PC-3 (cell line): ENCODE measurements at regions of chr4 and their contacts with region 1.

Region 1: DNA sequence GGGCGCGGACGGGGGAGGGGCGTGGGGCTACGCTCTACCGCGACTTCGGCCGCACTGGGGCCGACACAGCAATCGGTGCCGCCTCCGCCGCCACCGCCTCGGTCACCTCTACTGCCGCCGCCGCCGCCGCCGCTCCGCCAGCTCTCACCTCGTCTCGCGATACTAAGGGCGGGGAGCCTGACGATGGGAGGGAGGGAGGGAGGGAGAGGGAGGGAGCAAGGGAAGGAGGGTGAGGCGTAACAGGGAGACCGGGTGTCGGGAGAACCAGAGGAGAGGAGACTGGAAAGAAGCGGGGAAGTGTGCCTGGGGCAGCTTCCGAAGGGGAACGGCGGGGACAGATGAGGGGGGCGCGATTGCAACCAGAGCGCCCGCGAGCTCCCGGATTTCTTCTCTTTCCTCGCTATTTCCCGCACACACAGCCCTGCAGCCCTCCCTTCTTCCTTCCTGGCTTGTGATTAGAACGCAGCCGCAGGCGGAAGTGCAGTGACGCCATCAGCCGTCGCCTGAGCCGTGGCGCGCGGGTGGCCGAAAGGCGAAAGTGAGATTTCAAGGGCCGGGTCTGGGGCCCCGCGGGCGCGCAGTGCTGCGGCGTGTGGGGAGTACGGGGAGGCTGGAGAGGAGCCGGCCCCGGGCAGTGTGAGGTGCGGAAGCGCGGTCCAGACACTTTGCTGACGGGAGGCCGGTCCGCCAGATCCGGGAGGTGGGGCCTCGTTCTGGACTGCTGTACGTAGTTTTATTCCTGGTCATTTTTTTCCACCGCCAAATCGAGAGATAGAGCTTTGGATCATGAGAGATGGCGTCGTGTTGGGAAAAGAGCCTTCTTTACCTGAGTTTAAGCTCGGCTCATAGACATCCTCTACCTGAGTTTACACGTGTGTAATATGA is at the start of gene ANKRD17:
- DNase-seq: peak; percentile 96
- ATAC-seq: peak; percentile 65
- H3K4me3 ChIP-seq: peak within 1 kb of the TSS; percentile 90
- H3K27ac ChIP-seq: peak within 1 kb of the TSS; percentile 92
- H3K4me1 ChIP-seq: peaks cover 26% of the 10 kb centered on the region
- H3K27me3 ChIP-seq: no peaks in the 10 kb centered on the region
- CTCF ChIP-seq: 0 out of 2 replicates have a peak, but pooled peaks have one; percentile 2
- total RNA-seq, gene ANKRD17: 51.2 and 64.4 TPM in 2 replicates

Region 2: DNA sequence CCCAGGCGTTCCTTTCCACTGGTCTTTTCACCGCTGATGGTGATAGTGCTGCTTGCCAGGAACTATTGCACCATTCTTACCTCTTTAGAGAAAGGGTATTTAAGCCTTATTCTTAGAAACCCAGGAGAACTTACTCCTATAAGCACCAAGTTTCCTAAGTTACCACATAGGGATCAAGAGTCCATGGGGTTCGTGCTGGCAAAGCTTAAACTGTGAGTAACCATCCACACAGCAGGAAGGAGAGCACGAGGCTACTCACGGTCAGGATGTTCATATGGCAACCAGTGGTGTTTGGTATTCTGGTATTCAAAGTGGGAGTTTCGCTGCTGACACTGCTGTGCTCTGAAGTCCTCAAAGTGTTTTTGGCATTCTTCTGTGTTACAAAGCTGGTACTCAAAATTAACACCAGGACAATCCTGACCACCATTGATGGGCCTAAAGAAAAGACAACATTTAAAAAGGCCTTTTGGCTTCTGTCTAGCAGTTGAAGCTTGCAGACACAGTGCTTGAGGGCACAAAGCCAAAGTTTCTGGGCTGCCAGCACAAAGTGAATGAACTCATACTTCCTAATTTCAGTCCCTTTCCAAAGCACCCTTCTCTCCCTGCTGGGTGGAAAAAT is 946.8 kb before region 1 on chr4:
- CTCF ChIA-PET with region 1: no interaction called
- POLR2A ChIA-PET with region 1: no interaction called
- intact Hi-C with region 1: loop called (anchors 10 kb)
- DNase-seq: peak; percentile 85
- ATAC-seq: peak; percentile 86
- H3K4me3 ChIP-seq: no peak overlapping the region
- H3K27ac ChIP-seq: peak overlapping the region; percentile 74
- H3K4me1 ChIP-seq: peaks cover 49% of the 10 kb centered on the region
- H3K27me3 ChIP-seq: no peaks in the 10 kb centered on the region
- CTCF ChIP-seq: no peak

Region 3: GRCh38 chr4:73127839-73128453 is 131.0 kb before region 1 on chr4:
- CTCF ChIA-PET with region 1: interaction called, 14 read pairs
- POLR2A ChIA-PET with region 1: no interaction called
- intact Hi-C with region 1: loop called (anchors 2 kb)
- DNase-seq: peak; percentile 28
- ATAC-seq: peak; percentile 91
- H3K4me3 ChIP-seq: no peak overlapping the region
- H3K27ac ChIP-seq: no peak overlapping the region
- H3K4me1 ChIP-seq: no peaks in the 10 kb centered on the region
- H3K27me3 ChIP-seq: no peaks in the 10 kb centered on the region
- CTCF ChIP-seq: peak; percentile 59

Region 4: DNA sequence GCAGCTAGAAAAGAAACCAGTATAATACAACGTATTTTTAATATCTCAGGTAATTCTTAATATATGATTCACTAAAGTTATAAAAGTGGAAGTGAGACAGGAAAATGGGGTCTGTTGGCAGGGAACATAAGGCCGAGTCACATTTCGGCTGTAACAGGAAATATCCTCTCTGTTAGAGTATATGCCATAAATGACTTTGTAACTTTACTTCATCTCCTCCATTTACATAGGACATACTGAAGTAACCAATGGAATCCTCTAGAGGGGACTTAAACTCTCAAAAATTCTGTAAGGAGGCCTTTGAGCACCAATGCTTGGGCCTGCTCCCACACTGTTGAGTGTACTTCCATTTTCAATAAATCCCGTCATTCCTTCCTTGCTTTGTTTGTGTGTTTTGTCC is 71.6 kb before region 1 on chr4:
- CTCF ChIA-PET with region 1: no interaction called
- POLR2A ChIA-PET with region 1: no interaction called
- intact Hi-C with region 1: loop called (anchors 5 kb)
- DNase-seq: peak; percentile 61
- ATAC-seq: peak; percentile 96
- H3K4me3 ChIP-seq: peak overlapping the region; percentile 11; the same call in 1 of the 2 replicates
- H3K27ac ChIP-seq: peak overlapping the region; percentile 29
- H3K4me1 ChIP-seq: peaks cover 9% of the 10 kb centered on the region
- H3K27me3 ChIP-seq: no peaks in the 10 kb centered on the region
- CTCF ChIP-seq: peak; percentile 27; the same call in 1 of the 2 replicates

Region 5: GRCh38 chr4:73222466-73223257 is 36.3 kb before region 1 on chr4:
- CTCF ChIA-PET with region 1: no interaction called
- POLR2A ChIA-PET with region 1: interaction called, 3 read pairs
- intact Hi-C with region 1: loop called (anchors 1 kb)
- DNase-seq: peak; percentile 95
- ATAC-seq: peak; percentile 100
- H3K4me3 ChIP-seq: peak overlapping the region; percentile 69
- H3K27ac ChIP-seq: peak overlapping the region; percentile 50
- H3K4me1 ChIP-seq: peaks cover 19% of the 10 kb centered on the region
- H3K27me3 ChIP-seq: no peaks in the 10 kb centered on the region
- CTCF ChIP-seq: no peak

Region 6: DNA sequence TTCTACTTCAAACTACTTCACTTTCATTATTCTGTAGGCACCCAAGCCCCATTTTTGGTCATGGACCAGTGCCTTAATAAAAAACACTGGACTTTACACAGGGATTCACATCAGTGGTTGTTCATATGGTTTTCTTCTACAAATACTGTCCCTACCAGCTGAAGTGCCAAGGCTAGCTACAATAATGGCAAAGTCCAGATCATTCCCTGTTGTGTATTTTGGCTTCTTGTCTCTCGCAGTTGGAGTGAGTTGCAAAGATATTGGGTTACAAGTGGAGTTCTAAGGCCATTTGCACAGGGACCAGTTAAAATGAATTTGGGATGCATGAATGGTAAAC is 16.4 kb after region 1 on chr4:
- CTCF ChIA-PET with region 1: no interaction called
- POLR2A ChIA-PET with region 1: no interaction called
- intact Hi-C with region 1: no loop called
- DNase-seq: no peak
- ATAC-seq: no peak
- H3K4me3 ChIP-seq: no peak overlapping the region
- H3K27ac ChIP-seq: no peak overlapping the region
- H3K4me1 ChIP-seq: peaks cover 7% of the 10 kb centered on the region; the same call in 1 of the 2 replicates
- H3K27me3 ChIP-seq: no peaks in the 10 kb centered on the region
- CTCF ChIP-seq: no peak